Activated CD4-positive, alpha-beta T cell treated with anti-CD3 and anti-CD28 coated beads, Interleukin-2, amount 10 ng/mL, durations not matched to agents 24 days and 14 days (primary cell): ENCODE measurements at regions of chr3 and their contacts with region 1.

Region 1: DNA sequence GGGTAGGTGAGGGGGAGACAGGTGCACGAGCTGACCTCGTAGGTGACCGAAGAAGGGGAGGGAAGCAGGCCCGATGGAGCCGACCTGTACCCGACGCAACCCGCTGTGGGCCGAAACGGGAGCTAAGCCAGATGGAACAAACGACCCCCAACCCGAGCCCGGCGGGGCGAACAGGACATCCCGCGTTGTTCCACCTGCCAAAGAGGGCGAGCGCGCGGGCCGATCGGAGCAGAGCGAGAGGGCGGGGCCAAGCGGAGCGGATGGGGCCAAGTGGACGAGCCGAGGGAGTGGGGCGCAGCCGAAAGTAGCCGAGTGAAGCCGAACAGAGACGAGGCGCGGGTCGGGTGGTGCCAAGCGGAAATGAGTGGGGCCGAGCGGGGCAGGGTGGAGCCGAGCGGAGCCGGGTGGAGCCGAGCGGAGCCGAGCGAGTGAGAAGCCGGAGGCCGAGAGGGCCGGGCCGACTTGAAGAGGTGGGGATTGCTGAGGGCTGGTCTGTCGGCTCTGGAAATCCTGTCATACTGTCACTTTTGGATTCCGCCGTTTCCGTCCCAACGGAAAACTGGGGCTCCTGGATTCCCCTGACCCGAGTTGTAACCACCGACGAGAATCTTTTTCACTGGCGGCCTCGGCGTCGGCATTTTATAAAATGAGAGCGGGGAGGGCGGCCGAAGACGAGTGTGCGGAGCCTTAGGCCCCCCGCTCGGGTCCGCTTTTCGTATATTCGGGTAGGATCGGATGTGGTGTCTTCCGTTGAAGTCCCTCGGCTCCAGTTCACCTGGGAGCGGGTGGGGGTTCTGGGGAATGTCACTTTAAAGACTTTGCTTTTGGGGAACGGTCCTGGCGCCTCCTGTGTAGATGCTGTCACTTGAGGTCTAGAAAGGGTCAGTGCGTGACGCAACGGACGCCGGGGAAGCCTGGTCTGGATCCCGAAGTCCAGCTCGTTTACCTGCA is 15.6 kb upstream of the WNT7A start:
- DNase-seq: peak; percentile 99
- H3K4me3 Mint-ChIP-seq: peak overlapping the region; percentile 90
- H3K27ac Mint-ChIP-seq: peak overlapping the region; percentile 76
- H3K4me1 Mint-ChIP-seq: peaks cover 23% of the 10 kb centered on the region
- H3K27me3 Mint-ChIP-seq: peaks cover 2% of the 10 kb centered on the region

Region 2: DNA sequence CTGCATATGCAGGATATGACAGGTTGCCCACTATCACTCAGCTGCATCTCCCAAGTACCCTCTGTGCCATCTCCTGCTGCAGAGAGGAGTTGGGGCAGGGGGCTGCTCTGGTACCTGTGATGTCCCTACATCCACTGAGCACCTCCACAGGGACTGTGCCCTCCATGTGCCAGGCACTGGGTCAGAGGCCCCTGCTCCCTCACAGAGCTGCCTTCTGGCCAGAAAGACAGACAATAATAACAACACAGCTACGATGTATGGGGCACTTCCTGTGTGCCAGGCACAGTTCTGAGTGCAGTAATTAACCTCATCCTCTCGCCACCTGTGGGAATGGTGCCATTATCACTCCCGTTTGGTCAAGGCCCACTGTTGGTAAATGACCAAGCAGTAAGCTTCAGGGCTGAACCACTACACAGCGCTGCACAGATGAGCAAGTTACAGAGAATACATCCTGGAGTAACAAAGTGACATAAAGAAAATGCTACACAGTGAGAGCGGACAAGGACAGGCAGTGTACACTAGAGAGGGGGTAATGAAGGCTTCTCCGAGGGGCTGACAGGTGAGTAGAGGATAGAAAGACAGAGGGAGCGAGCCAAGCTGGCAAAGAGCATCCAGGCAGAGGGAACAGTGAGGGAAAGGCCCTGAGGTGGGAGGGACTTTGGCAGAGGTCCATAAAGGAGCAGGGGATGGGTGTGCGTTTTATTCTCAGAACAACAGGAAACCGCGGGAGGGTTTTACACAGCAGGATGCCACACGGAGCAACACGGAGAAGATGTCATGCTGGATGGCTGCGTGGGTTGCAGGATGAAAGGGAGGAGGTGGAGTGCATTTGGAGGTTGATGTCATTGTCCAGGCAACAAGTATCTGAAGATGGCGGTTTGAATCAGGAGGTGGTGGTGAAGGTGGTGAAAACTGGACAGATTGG is 29.1 kb before region 1 on chr3:
- intact Hi-C with region 1: loop called (anchors 2 kb)
- DNase-seq: peak; percentile 89
- H3K4me3 Mint-ChIP-seq: peak overlapping the region; percentile 81
- H3K27ac Mint-ChIP-seq: peak overlapping the region; percentile 90
- H3K4me1 Mint-ChIP-seq: peaks cover 37% of the 10 kb centered on the region
- H3K27me3 Mint-ChIP-seq: peaks cover 7% of the 10 kb centered on the region

Region 3: DNA sequence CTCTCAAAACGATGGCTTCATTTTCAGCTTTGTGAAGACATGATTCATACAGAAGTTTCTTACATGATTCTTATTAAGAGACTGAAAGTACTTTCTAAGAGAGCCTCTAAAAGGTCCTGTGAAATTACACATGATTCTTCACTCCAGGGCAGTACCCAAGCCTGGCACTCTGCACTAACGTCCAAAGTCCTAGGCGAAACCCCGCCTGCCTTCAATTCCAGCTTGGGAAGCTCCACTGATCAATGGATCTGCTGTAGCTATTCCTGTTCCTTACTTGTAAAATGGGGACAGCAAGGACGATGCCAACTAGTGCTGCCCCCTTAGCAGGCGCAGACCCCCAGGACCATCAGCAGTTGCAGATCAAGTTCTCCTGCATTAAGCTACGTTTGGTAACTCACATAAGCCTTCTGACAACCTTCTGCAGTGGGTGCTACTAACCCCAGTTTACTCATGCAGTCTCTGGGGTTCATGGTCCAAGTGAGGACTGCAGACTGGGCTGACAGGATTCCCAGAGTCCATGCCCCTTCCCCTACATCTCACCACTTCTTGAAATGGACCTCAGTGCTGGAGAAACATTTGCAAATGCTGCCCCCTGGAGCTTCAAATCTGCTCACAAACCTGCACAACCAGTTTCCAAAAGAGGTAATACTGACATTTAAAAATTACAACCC is 218.7 kb after region 1 on chr3:
- intact Hi-C with region 1: loop called (anchors 1 kb)
- DNase-seq: peak; percentile 51
- H3K4me3 Mint-ChIP-seq: no peak overlapping the region
- H3K27ac Mint-ChIP-seq: no peak overlapping the region
- H3K4me1 Mint-ChIP-seq: peaks cover 2% of the 10 kb centered on the region
- H3K27me3 Mint-ChIP-seq: no peaks in the 10 kb centered on the region

Region 4: DNA sequence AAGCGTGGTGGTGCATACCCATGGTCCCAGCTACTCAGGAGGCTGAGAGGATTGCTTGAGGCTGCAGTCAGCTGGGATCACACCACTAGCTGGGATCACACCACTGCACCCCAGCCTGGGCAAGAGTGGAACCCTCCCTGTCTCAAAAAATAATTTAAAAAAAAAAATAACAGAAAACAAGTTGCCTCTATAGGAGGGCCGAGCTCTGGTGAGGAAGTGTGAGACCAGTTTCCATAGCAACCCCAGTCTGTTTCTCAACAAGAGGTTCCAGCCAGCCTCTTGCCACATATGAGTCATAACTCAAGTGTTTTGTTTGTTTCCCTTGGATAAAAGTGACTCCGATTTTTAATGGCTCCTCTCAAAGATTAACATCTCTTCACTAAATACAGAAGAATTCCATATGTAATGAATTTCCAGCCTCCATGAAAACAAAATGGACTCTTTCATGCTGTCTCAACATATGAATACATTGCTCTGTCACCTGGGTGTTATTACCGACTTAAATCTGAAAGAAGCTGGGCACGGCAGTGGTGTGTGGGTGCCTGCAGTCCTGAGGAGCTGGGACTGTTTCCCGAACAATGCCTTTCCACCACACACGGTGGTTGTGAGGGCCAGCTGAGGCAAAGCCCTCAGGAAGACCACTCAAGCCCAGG is 249.1 kb after region 1 on chr3:
- intact Hi-C with region 1: loop called (anchors 1 kb)
- DNase-seq: peak; percentile 93
- H3K4me3 Mint-ChIP-seq: peak overlapping the region; percentile 78
- H3K27ac Mint-ChIP-seq: peak overlapping the region; percentile 94
- H3K4me1 Mint-ChIP-seq: peaks cover 30% of the 10 kb centered on the region
- H3K27me3 Mint-ChIP-seq: no peaks in the 10 kb centered on the region

Region 5: DNA sequence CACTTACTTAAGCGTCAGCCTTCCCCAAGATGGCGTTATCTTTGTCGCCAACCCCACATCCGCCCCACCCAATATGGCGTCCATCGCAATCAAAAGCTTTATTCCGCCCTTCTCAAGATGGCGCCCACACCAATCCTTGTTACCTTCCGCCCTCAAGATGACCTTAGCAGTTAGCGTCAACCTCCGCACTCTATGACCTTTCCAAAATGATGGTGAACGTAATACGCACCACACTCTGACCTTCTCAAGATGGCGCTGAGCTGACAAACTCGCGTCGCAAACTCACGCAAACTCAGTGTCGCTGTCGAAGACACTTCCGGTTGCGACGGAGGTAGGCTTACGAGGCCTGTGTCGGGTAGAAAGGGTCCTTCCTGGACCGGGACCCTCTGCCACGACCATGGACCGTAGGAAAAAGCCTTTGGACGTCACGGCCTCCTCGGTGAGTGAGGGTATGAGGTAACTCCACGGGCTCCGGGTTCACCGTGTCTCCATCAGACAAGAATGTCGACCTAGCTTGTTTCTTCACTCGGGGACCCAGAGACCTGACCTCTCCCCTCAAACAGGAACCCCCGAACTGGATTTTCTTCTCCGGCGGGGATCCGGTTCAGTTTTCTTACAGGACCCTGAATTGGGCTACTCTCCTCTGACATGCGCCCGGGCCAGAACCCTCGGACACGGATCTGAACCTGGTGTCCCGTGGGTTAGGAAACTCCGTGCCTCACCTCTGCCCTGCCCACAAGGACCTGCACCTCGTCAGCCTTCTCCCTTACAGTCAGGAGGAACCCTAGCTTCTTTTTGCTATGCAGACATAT is 756.2 kb after region 1 on chr3 and contains the start of gene CCDC174:
- intact Hi-C with region 1: loop called (anchors 5 kb)
- DNase-seq: peak; percentile 99
- H3K4me3 Mint-ChIP-seq: peak within 1 kb of the TSS; percentile 100
- H3K27ac Mint-ChIP-seq: peak within 1 kb of the TSS; percentile 95
- H3K4me1 Mint-ChIP-seq: peaks cover 38% of the 10 kb centered on the region
- H3K27me3 Mint-ChIP-seq: peaks cover 3% of the 10 kb centered on the region
- total RNA-seq, gene CCDC174: 16.0 and 16.8 TPM in 2 replicates